Astrocyte of the cerebellum (primary cell): ENCODE measurements at regions of chr9 and their contacts with region 1.

Region 1: GRCh38 chr9:30697958-30698357 is 1686.5 kb upstream of the ACO1 start:
- DNase-seq: no peak
- H3K4me3 ChIP-seq: no peak overlapping the region
- CTCF ChIP-seq: no peak

Region 2: DNA sequence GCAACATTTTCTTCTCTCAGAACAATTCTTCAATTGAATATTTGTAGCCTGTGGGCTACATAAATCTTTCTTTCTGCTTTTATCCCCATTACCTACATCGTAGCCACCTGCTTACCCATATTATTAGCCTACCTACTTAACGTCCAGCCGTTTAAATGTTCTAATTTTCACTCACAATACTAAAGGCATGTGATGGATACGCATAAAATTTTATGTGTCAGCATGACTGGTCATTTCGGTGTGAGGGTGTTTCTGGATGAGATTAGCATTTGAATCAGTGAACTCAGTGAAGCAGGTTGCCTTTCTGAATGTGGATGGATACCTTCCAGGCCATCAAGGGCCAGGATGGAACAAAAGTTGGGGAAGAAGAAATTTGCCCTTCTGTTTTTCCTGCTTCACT is 36.0 kb before region 1 on chr9:
- in situ Hi-C with region 1: loop called (anchors 5 kb)
- DNase-seq: no peak
- H3K4me3 ChIP-seq: no peak overlapping the region
- CTCF ChIP-seq: no peak